ENCODE measurements at regions of chr17 and their contacts with region 1.

Region 1: GRCh38 chr17:28282596-28282995 is 36.4 kb upstream of the TMEM97 start:
- DNase-seq: no peak
- H3K4me3 Mint-ChIP-seq: no peak overlapping the region
- H3K27ac Mint-ChIP-seq: no peak overlapping the region
- H3K4me1 Mint-ChIP-seq: peaks cover 10% of the 10 kb centered on the region
- H3K27me3 Mint-ChIP-seq: peaks cover 10% of the 10 kb centered on the region

Region 2: GRCh38 chr17:28295677-28296578 is 13.3 kb after region 1 on chr17:
- CTCF ChIA-PET with region 1: no interaction called
- intact Hi-C with region 1: loop called (anchors 1 kb)
- DNase-seq: no peak
- H3K4me3 Mint-ChIP-seq: no peak overlapping the region
- H3K27ac Mint-ChIP-seq: peak overlapping the region; percentile 56
- H3K4me1 Mint-ChIP-seq: peaks cover 16% of the 10 kb centered on the region
- H3K27me3 Mint-ChIP-seq: peaks cover 4% of the 10 kb centered on the region

Region 3: GRCh38 chr17:28327031-28327607 is 44.5 kb after region 1 on chr17:
- CTCF ChIA-PET with region 1: no interaction called
- intact Hi-C with region 1: loop called (anchors 10 kb)
- DNase-seq: peak; percentile 41
- H3K4me3 Mint-ChIP-seq: no peak overlapping the region
- H3K27ac Mint-ChIP-seq: peak overlapping the region; percentile 50
- H3K4me1 Mint-ChIP-seq: peaks cover 19% of the 10 kb centered on the region
- H3K27me3 Mint-ChIP-seq: no peaks in the 10 kb centered on the region